Activated CD8-positive, alpha-beta T cell treated with anti-CD3 and anti-CD28 coated beads for 36 hours (primary cell): ENCODE measurements at regions of chr1 and their contacts with region 1.

Region 1: DNA sequence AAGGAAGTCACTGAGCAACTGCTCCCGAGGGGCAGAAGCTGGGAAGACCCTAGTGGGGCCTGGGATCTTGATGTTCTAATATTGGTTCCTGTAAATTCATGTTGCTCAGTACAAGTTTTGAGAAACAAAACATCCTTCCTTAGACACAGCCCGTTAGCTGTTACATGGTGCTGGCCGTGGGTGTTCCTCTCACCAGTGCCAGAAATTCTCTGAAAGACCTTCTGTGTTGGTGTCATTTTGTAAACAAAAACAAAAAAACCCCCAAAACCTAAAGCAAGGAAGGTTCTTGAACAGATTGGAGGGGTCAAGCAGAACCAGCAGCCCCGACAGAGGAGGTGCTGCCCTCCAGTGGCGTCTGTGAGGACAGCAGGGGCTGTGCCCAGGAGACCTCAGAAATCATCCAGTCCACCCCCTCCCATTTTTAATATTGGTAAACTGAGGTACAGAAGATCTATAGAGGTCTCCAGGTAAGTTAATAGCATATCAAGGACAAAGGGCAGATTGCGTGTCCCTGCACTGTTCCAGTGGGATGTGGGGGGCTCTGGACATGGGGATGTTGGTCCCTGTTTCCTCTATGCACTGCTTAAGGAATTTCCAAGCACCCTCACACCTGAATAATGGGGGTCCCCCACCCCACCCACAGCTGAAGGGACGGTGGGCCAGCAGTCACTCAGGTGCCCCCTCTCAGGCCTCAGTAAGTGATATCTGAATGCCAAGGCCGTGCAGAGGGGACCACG is 38.2 kb downstream of the SLC2A7 start:
- DNase-seq: peak; percentile 78
- ATAC-seq: peak; percentile 74
- H3K4me3 Mint-ChIP-seq: peak overlapping the region; percentile 40
- H3K27ac Mint-ChIP-seq: peak overlapping the region; percentile 86
- H3K4me1 Mint-ChIP-seq: peaks cover 42% of the 10 kb centered on the region
- H3K27me3 Mint-ChIP-seq: no peaks in the 10 kb centered on the region
- CTCF ChIP-seq: peak; percentile 100

Region 2: GRCh38 chr1:8866173-8866791 is 121.8 kb before region 1 on chr1:
- CTCF ChIA-PET with region 1: interaction called, 8 read pairs
- POLR2A ChIA-PET with region 1: interaction called, 10 read pairs
- intact Hi-C with region 1: no loop called
- DNase-seq: no peak
- ATAC-seq: peak; percentile 1
- H3K4me3 Mint-ChIP-seq: peak overlapping the region; percentile 41
- H3K27ac Mint-ChIP-seq: peak overlapping the region; percentile 83
- H3K4me1 Mint-ChIP-seq: peaks cover 66% of the 10 kb centered on the region
- H3K27me3 Mint-ChIP-seq: no peaks in the 10 kb centered on the region
- CTCF ChIP-seq: no peak

Region 3: DNA sequence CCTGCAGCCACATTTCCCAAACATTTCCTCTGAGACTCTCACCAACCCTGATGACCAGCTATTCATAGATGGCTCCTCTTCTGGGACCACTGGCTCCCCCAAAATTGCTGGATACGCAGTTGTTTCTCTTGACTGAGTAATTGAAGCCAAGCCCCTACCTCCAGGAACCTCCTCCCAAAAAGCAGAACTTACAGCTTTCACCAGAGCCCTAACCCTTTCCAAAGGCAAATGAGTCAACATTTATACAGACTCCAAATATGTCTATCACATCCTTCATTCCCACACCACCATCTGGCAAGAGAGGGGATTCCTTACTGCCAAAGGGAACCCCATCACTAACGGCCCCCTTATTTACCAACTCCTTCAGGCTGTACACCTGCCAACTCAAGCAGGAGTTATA is 62.6 kb before region 1 on chr1:
- CTCF ChIA-PET with region 1: interaction called, 142 read pairs
- POLR2A ChIA-PET with region 1: interaction called, 9 read pairs
- intact Hi-C with region 1: no loop called
- DNase-seq: no peak
- ATAC-seq: no peak
- H3K4me3 Mint-ChIP-seq: no peak overlapping the region
- H3K27ac Mint-ChIP-seq: no peak overlapping the region
- H3K4me1 Mint-ChIP-seq: peaks cover 28% of the 10 kb centered on the region
- H3K27me3 Mint-ChIP-seq: no peaks in the 10 kb centered on the region
- CTCF ChIP-seq: no peak

Region 4: GRCh38 chr1:8962812-8963530 is 25.1 kb before region 1 on chr1:
- CTCF ChIA-PET with region 1: interaction called, 53 read pairs
- POLR2A ChIA-PET with region 1: interaction called, 7 read pairs
- intact Hi-C with region 1: no loop called
- DNase-seq: peak; percentile 84
- ATAC-seq: peak; percentile 50
- H3K4me3 Mint-ChIP-seq: peak overlapping the region; percentile 93
- H3K27ac Mint-ChIP-seq: peak overlapping the region; percentile 92
- H3K4me1 Mint-ChIP-seq: peaks cover 79% of the 10 kb centered on the region
- H3K27me3 Mint-ChIP-seq: no peaks in the 10 kb centered on the region
- CTCF ChIP-seq: peak; percentile 70